Panc1 (cell line): ENCODE measurements at regions of chr16 and their contacts with region 1.

Region 1: GRCh38 chr16:71826533-71827017 is 17.9 kb upstream of the AP1G1 start:
- DNase-seq: no peak
- ATAC-seq: no peak
- H3K4me3 ChIP-seq: no peak overlapping the region
- H3K27ac ChIP-seq: no peak overlapping the region
- H3K4me1 ChIP-seq: no peaks in the 10 kb centered on the region
- H3K27me3 ChIP-seq: no peaks in the 10 kb centered on the region
- CTCF ChIP-seq: no peak

Region 2: GRCh38 chr16:71781741-71782140 is 44.8 kb before region 1 on chr16:
- CTCF ChIA-PET with region 1: no interaction called
- POLR2A ChIA-PET with region 1: no interaction called
- in situ Hi-C with region 1: no loop called
- intact Hi-C with region 1: no loop called
- DNase-seq: no peak
- ATAC-seq: no peak
- H3K4me3 ChIP-seq: no peak overlapping the region
- H3K27ac ChIP-seq: no peak overlapping the region
- H3K4me1 ChIP-seq: no peaks in the 10 kb centered on the region
- H3K27me3 ChIP-seq: no peaks in the 10 kb centered on the region
- CTCF ChIP-seq: no peak

Region 3: DNA sequence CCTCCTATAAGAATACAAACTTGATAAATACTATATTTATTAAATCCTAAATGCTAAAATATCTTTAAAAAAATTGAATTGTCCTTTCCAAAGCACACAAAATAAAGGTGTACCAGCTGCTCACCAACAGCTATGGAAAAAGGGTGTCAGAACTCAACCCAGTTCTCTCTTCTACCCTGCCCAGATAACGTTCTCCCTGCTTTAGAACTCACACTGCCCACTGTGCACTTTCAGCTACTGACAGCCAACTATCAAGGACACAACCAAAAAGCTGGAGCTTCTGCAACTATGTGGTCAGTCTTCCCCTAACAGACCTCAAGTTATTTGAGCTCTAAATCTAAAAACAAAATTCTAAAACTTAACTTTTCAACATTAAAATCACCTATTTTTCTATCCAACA is 31.6 kb before region 1 on chr16:
- CTCF ChIA-PET with region 1: no interaction called
- POLR2A ChIA-PET with region 1: interaction called, 14 read pairs
- in situ Hi-C with region 1: no loop called
- intact Hi-C with region 1: no loop called
- DNase-seq: no peak
- ATAC-seq: no peak
- H3K4me3 ChIP-seq: no peak overlapping the region
- H3K27ac ChIP-seq: no peak overlapping the region
- H3K4me1 ChIP-seq: 0 out of 2 replicates have a peak, but pooled peaks cover 2% of the 10 kb centered on the region
- H3K27me3 ChIP-seq: no peaks in the 10 kb centered on the region
- CTCF ChIP-seq: no peak

Region 4: DNA sequence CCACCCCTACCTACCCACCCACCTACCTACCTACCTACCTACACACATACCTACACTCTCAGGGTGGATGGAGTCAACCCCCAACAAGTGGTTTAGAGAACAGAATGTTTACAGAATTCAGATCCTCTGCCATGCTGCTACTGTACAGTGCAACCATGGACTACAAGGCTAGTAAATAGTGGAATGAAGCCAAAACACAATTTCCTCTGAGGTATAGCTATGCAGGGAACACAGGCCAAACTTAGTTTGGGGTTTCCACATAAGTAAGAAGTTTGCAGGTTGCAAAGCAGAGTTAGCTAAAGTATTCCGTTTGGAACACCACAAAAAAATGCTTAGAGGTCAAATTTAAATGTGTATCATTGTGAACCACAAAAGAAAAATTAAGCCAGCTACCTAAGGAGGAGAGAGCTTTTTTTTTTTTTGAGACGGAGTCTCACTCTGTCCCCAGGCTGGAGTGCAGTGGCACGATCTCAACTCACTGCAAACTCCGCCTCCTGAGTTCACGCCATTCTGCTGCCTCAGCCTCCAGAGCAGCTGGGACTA is 15.2 kb before region 1 on chr16:
- CTCF ChIA-PET with region 1: interaction called, 15 read pairs
- POLR2A ChIA-PET with region 1: no interaction called
- in situ Hi-C with region 1: no loop called
- intact Hi-C with region 1: no loop called
- DNase-seq: no peak
- ATAC-seq: no peak
- H3K4me3 ChIP-seq: no peak overlapping the region
- H3K27ac ChIP-seq: no peak overlapping the region
- H3K4me1 ChIP-seq: peaks cover 11% of the 10 kb centered on the region
- H3K27me3 ChIP-seq: no peaks in the 10 kb centered on the region
- CTCF ChIP-seq: no peak

Region 5: DNA sequence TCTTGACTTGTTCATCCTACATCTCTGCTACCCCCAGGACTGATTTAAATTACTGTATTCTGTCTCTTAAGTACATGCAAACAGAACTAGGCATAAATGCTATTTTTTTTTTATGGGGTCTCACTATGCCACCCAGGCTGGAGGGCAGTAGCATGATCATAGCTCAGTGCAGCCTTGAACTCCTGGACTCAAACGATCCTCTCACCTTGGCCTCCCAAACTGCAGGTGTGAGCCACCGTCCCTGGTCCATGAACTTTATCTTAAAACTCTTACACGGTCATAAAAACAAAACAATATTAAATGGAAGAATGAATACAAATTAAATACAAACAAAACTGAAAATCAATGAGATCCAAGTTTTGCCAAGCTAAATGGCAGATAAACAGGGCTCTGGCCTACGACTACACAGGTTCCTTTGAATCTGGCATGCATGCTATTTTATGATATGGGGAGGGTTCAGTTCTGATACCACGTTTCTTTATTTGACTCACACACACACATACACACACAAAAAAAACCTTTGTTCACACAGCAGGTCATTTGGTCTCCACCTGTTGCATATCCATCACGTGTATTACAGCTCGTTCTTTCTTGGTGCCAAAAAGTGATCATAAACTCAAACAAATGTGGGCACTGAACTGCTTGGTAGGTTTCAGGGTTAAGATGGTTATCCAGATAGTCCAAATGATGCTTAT is 174.8 kb after region 1 on chr16:
- CTCF ChIA-PET with region 1: no interaction called
- POLR2A ChIA-PET with region 1: no interaction called
- in situ Hi-C with region 1: no loop called
- intact Hi-C with region 1: no loop called
- DNase-seq: no peak
- ATAC-seq: no peak
- H3K4me3 ChIP-seq: no peak overlapping the region
- H3K27ac ChIP-seq: no peak overlapping the region
- H3K4me1 ChIP-seq: no peaks in the 10 kb centered on the region
- H3K27me3 ChIP-seq: peaks cover 2% of the 10 kb centered on the region; the same call in 1 of the 2 replicates
- CTCF ChIP-seq: no peak

Region 6: GRCh38 chr16:72021043-72021442 is 194.5 kb after region 1 on chr16:
- CTCF ChIA-PET with region 1: no interaction called
- POLR2A ChIA-PET with region 1: no interaction called
- in situ Hi-C with region 1: no loop called
- intact Hi-C with region 1: no loop called
- DNase-seq: no peak
- ATAC-seq: no peak
- H3K4me3 ChIP-seq: no peak overlapping the region
- H3K27ac ChIP-seq: no peak overlapping the region
- H3K4me1 ChIP-seq: no peaks in the 10 kb centered on the region
- H3K27me3 ChIP-seq: no peaks in the 10 kb centered on the region
- CTCF ChIP-seq: no peak

Region 7: GRCh38 chr16:72224260-72224768 is 397.7 kb after region 1 on chr16:
- CTCF ChIA-PET with region 1: no interaction called
- POLR2A ChIA-PET with region 1: no interaction called
- in situ Hi-C with region 1: no loop called
- intact Hi-C with region 1: no loop called
- DNase-seq: no peak
- ATAC-seq: no peak
- H3K4me3 ChIP-seq: no peak overlapping the region
- H3K27ac ChIP-seq: no peak overlapping the region
- H3K4me1 ChIP-seq: no peaks in the 10 kb centered on the region
- H3K27me3 ChIP-seq: no peaks in the 10 kb centered on the region
- CTCF ChIP-seq: no peak